ENCODE measurements at regions of chrX and their contacts with region 1.

Region 1: GRCh38 chrX:123173833-123174232 is 10.2 kb upstream of the GRIA3 start:
- DNase-seq: no peak
- H3K4me3 Mint-ChIP-seq: no peak overlapping the region
- H3K27ac Mint-ChIP-seq: no peak overlapping the region
- H3K4me1 Mint-ChIP-seq: peaks cover 11% of the 10 kb centered on the region
- H3K27me3 Mint-ChIP-seq: no peaks in the 10 kb centered on the region
- CTCF ChIP-seq: no peak

Region 2: GRCh38 chrX:123064053-123064452 is 109.8 kb before region 1 on chrX:
- CTCF ChIA-PET with region 1: no interaction called
- intact Hi-C with region 1: no loop called
- DNase-seq: no peak
- H3K4me3 Mint-ChIP-seq: no peak overlapping the region
- H3K27ac Mint-ChIP-seq: no peak overlapping the region
- H3K4me1 Mint-ChIP-seq: no peaks in the 10 kb centered on the region
- H3K27me3 Mint-ChIP-seq: no peaks in the 10 kb centered on the region
- CTCF ChIP-seq: no peak

Region 3: GRCh38 chrX:123422877-123423276 is 249.0 kb after region 1 on chrX:
- CTCF ChIA-PET with region 1: no interaction called
- intact Hi-C with region 1: loop called (anchors 10 kb)
- DNase-seq: peak; percentile 12
- H3K4me3 Mint-ChIP-seq: no peak overlapping the region
- H3K27ac Mint-ChIP-seq: no peak overlapping the region
- H3K4me1 Mint-ChIP-seq: no peaks in the 10 kb centered on the region
- H3K27me3 Mint-ChIP-seq: peaks cover 14% of the 10 kb centered on the region
- CTCF ChIP-seq: peak; percentile 31

Measured in Calu3 (cell line).